ENCODE measurements at regions of chr3 and their contacts with region 1.

Region 1: GRCh38 chr3:4722103-4722502 is 229.0 kb downstream of the ITPR1 start:
- DNase-seq: no peak
- H3K4me3 ChIP-seq: no peak overlapping the region
- H3K27ac ChIP-seq: peak overlapping the region; percentile 73
- H3K4me1 ChIP-seq: peaks cover 31% of the 10 kb centered on the region
- H3K27me3 ChIP-seq: no peaks in the 10 kb centered on the region
- CTCF ChIP-seq: peak in 1 of 3 experiments; percentile 33
- POLR2A ChIP-seq: no peak

Region 2: GRCh38 chr3:4986782-4987537 is 264.9 kb after region 1 on chr3:
- intact Hi-C with region 1: loop called (anchors 5 kb)
- DNase-seq: peak in 1 of 2 donors; percentile 97
- H3K4me3 ChIP-seq: peak overlapping the region; percentile 43 to 48
- H3K27ac ChIP-seq: peak overlapping the region; percentile 98
- H3K4me1 ChIP-seq: peaks cover 70% of the 10 kb centered on the region
- H3K27me3 ChIP-seq: no peaks in the 10 kb centered on the region
- CTCF ChIP-seq: no peak
- POLR2A ChIP-seq: no peak

Region 3: GRCh38 chr3:5026331-5027218 is 304.5 kb after region 1 on chr3:
- intact Hi-C with region 1: loop called (anchors 5 kb)
- DNase-seq: no peak
- H3K4me3 ChIP-seq: peak overlapping the region; percentile 45 to 52
- H3K27ac ChIP-seq: peak overlapping the region; percentile 78
- H3K4me1 ChIP-seq: peaks cover 21% of the 10 kb centered on the region
- H3K27me3 ChIP-seq: no peaks in the 10 kb centered on the region
- CTCF ChIP-seq: peak in 2 of 3 experiments; percentile 56 to 73
- POLR2A ChIP-seq: no peak

Measured in vagina (tissue), 2 donors.